CD8-positive, alpha-beta T cell (primary cell): ENCODE measurements at regions of chr1 and their contacts with region 1.

Region 1: GRCh38 chr1:172826096-172826743 is 167.3 kb downstream of the FASLG start:
- DNase-seq: peak in 2 of 9 experiments; percentile 22 to 43
- ATAC-seq: peak; percentile 46
- H3K4me3 ChIP-seq: no peak overlapping the region
- H3K4me3 Mint-ChIP-seq: no peak overlapping the region
- H3K27ac ChIP-seq: peak overlapping the region in 1 of 2 experiments; percentile 30
- H3K27ac Mint-ChIP-seq: no peak overlapping the region
- H3K4me1 ChIP-seq: peaks cover 14% of the 10 kb centered on the region
- H3K4me1 Mint-ChIP-seq: peaks cover 2% of the 10 kb centered on the region
- H3K27me3 ChIP-seq: no peaks in the 10 kb centered on the region
- H3K27me3 Mint-ChIP-seq: no peaks in the 10 kb centered on the region
- CTCF ChIP-seq: peak; percentile 53

Region 2: GRCh38 chr1:173017792-173018191 is 191.6 kb after region 1 on chr1:
- CTCF ChIA-PET with region 1: no interaction called
- POLR2A ChIA-PET with region 1: no interaction called
- intact Hi-C with region 1: loop called in 1 of 2 experiments (anchors 5 kb)
- DNase-seq: no peak
- ATAC-seq: no peak
- H3K4me3 ChIP-seq: no peak overlapping the region
- H3K4me3 Mint-ChIP-seq: no peak overlapping the region
- H3K27ac ChIP-seq: no peak overlapping the region
- H3K27ac Mint-ChIP-seq: no peak overlapping the region
- H3K4me1 ChIP-seq: peaks cover 4% of the 10 kb centered on the region
- H3K4me1 Mint-ChIP-seq: peaks cover 7% of the 10 kb centered on the region
- H3K27me3 ChIP-seq: no peaks in the 10 kb centered on the region
- H3K27me3 Mint-ChIP-seq: no peaks in the 10 kb centered on the region
- CTCF ChIP-seq: no peak

Region 3: DNA sequence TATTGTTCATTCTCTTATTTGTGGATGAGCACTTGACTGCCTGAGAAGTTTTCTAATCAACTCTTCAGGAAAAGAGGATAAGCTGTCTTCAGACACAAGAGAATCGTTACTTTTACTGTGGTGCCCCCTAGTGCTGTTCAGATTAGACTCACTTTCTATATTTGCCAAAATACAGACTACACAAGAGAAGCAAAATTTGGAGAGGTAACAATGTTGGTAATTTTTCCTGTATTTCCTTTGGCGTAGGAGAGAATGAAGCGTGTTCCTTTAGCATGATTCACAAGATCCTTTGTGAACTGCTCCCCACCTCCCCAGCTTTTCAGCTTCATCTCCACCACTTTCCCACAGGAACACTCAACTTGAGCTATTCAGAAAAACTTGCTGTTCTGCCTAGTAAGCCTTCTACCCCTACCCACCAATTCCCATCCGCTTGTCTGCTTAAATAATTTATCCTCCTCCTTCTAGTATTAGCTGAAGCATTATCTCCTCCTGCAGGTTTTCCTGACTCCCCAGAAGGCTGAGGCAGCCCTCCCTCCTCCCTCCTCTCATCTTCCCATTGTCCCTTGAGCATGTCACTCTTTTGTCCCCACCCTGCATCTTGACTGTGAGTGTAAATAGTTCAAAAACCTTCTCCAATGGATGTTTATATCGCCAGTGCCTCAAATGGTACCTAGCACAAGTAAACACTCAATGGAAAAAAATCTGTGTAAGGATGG is 376.4 kb after region 1 on chr1:
- CTCF ChIA-PET with region 1: interaction called, 59 read pairs
- POLR2A ChIA-PET with region 1: interaction called, 4 read pairs
- intact Hi-C with region 1: loop called in 1 of 2 experiments (anchors 1 kb)
- DNase-seq: peak in 2 of 9 experiments; percentile 41 to 54
- ATAC-seq: no peak
- H3K4me3 ChIP-seq: no peak overlapping the region
- H3K4me3 Mint-ChIP-seq: no peak overlapping the region
- H3K27ac ChIP-seq: no peak overlapping the region
- H3K27ac Mint-ChIP-seq: peak overlapping the region; percentile 3
- H3K4me1 ChIP-seq: peaks cover 40% of the 10 kb centered on the region
- H3K4me1 Mint-ChIP-seq: peaks cover 44% of the 10 kb centered on the region
- H3K27me3 ChIP-seq: no peaks in the 10 kb centered on the region
- H3K27me3 Mint-ChIP-seq: no peaks in the 10 kb centered on the region
- CTCF ChIP-seq: peak; percentile 39

Region 4: DNA sequence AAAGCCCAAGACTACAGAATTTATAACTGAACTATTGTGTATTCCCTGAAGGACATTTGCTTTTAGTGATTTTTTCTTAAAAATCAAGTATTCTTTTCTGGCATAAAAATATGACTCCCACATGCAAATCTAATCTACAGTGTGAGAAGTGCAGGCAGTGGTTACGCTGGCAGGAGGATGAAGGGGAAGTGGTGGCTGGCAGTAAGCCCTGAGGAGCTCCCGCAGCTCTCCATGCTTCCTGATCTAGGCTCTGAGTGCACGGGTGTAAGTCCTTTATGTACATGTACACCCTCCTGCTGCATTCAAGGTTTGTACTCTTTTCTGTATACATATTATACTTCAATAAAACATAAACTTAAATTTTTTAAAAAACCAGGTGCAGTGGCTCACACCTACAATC is 583.4 kb after region 1 on chr1:
- CTCF ChIA-PET with region 1: interaction called, 5 read pairs
- POLR2A ChIA-PET with region 1: no interaction called
- intact Hi-C with region 1: loop called in 1 of 2 experiments (anchors 5 kb)
- DNase-seq: peak in 5 of 9 experiments; percentile 16 to 63 (median 44)
- ATAC-seq: peak; percentile 42
- H3K4me3 ChIP-seq: no peak overlapping the region
- H3K4me3 Mint-ChIP-seq: peak overlapping the region; percentile 47
- H3K27ac ChIP-seq: no peak overlapping the region
- H3K27ac Mint-ChIP-seq: peak overlapping the region; percentile 41
- H3K4me1 ChIP-seq: peaks cover 31% of the 10 kb centered on the region
- H3K4me1 Mint-ChIP-seq: peaks cover 35% of the 10 kb centered on the region
- H3K27me3 ChIP-seq: no peaks in the 10 kb centered on the region
- H3K27me3 Mint-ChIP-seq: no peaks in the 10 kb centered on the region
- CTCF ChIP-seq: no peak